ENCODE measurements at regions of chr12 and their contacts with region 1.

Region 1: DNA sequence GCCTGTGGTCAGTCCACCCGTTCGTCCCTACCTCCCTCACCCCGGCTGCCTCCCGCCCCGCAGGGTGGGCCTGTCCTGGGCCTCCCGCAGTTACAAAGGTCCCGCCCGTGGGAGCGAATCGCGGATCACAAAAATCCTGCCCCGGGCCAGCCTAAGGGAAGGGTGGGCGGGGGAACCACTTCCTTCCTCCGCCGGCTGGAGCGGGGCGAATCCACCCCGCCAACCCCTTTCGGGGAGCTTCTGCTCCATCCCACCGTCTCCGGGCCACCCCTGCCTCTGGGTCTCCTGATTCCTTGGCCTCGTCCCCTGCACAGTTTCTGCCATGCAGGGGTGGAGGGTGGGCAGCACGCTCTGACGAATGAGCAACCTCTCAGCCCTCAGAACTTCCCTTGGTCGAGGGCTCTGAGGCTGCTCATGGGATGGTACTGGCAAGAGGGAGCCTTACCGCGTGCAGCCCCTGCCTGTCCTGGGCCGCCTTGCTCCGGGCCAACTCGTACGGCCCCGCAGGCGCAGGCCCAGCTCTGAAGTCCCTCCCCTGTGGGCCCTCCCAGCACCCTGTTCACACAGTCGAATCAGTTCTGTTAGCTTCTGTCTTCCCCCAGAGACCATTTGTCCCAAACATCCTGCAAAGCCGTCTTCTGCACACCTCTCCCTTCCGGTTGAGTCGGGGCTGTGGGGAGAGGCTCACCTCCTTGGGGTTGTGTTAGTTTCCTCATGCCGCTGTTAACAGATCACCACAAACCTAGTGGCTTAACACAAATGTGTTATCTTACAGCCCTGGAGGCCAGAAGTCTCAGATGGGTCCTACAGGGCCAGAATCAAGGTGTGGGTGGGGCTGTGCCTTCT is 589 bp upstream of the HVCN1 start:
- DNase-seq: peak; percentile 61
- ATAC-seq: peak; percentile 63
- H3K4me3 Mint-ChIP-seq: peak overlapping the region; percentile 92
- H3K27ac Mint-ChIP-seq: peak overlapping the region; percentile 89
- H3K4me1 Mint-ChIP-seq: peaks cover 82% of the 10 kb centered on the region
- H3K27me3 Mint-ChIP-seq: no peaks in the 10 kb centered on the region
- CTCF ChIP-seq: no peak

Region 2: GRCh38 chr12:110606253-110606611 is 83.3 kb before region 1 on chr12:
- CTCF ChIA-PET with region 1: interaction called, 4 read pairs
- POLR2A ChIA-PET with region 1: interaction called, 11 read pairs
- intact Hi-C with region 1: no loop called
- DNase-seq: no peak
- ATAC-seq: no peak
- H3K4me3 Mint-ChIP-seq: peak overlapping the region; percentile 85
- H3K27ac Mint-ChIP-seq: peak overlapping the region; percentile 94
- H3K4me1 Mint-ChIP-seq: peaks cover 84% of the 10 kb centered on the region
- H3K27me3 Mint-ChIP-seq: no peaks in the 10 kb centered on the region
- CTCF ChIP-seq: no peak

Region 3: DNA sequence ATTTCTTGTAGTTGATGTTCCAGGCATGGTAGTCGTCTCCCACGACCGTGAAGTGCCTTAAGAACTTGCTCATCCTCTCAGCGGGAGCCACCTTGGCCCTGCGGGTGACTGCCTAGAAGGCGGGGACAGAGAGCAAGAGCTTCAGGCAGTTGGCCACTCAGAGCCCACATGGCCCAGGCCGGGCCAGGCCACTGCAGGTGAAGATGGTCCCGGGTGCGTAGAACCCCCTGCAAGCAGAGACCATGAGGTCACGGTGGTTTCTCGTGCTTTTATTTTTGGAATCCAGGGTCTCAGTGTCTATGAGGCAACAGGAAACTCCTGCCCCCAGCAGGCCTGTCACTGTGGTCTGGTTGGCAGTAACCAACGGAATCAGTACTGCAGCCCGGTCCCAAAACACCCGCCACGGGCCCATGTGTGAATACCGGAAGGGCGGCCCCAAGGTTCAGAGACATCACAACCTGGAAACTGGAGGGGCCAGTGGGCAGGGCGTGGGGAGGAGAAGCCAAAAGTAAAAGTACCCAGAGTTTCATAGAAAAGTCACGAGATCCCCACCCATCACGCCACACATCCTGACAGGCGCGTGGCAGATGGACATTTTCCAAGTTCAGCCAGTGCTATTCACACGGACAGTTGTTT is 28.0 kb before region 1 on chr12:
- CTCF ChIA-PET with region 1: interaction called, 3 read pairs
- POLR2A ChIA-PET with region 1: interaction called, 30 read pairs
- intact Hi-C with region 1: loop called (anchors 1 kb)
- DNase-seq: peak; percentile 73
- ATAC-seq: peak; percentile 87
- H3K4me3 Mint-ChIP-seq: peak overlapping the region; percentile 82
- H3K27ac Mint-ChIP-seq: peak overlapping the region; percentile 97
- H3K4me1 Mint-ChIP-seq: peaks cover 89% of the 10 kb centered on the region
- H3K27me3 Mint-ChIP-seq: no peaks in the 10 kb centered on the region
- CTCF ChIP-seq: no peak

Region 4: DNA sequence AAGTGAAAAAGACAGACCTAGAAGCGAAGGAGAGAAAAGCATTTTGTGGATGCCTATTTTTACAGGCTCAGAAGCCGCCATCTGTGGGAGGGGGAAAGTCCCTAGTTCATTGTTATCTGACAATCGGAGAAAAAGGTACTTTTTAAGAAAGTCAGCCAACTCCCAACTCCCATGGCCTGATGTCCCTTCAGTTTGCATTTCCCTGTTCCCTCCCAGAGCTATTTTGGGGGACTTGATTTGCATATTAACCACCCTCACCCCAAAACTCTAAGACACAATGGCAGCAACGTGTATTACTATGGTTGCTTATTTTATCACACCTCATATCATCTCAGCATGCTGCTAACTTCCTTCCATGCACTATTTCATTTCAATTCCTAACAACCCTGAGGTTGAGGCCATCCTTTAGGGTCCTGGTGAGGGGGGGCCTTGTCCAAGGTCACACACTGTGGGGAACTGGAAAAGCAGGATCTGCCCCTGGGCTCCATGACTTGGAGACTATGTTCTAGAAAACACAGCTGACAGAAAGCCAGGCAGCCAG is 19.3 kb before region 1 on chr12:
- CTCF ChIA-PET with region 1: no interaction called
- POLR2A ChIA-PET with region 1: interaction called, 45 read pairs
- intact Hi-C with region 1: loop called (anchors 1 kb)
- DNase-seq: no peak
- ATAC-seq: peak; percentile 36
- H3K4me3 Mint-ChIP-seq: peak overlapping the region; percentile 78
- H3K27ac Mint-ChIP-seq: peak overlapping the region; percentile 94
- H3K4me1 Mint-ChIP-seq: peaks cover 96% of the 10 kb centered on the region
- H3K27me3 Mint-ChIP-seq: no peaks in the 10 kb centered on the region
- CTCF ChIP-seq: no peak

Region 5: GRCh38 chr12:110677206-110677911 is 12.1 kb before region 1 on chr12:
- CTCF ChIA-PET with region 1: interaction called, 4 read pairs
- POLR2A ChIA-PET with region 1: interaction called, 45 read pairs
- intact Hi-C with region 1: loop called (anchors 1 kb)
- DNase-seq: peak; percentile 50
- ATAC-seq: peak; percentile 64
- H3K4me3 Mint-ChIP-seq: peak overlapping the region; percentile 78
- H3K27ac Mint-ChIP-seq: peak overlapping the region; percentile 90
- H3K4me1 Mint-ChIP-seq: peaks cover 96% of the 10 kb centered on the region
- H3K27me3 Mint-ChIP-seq: no peaks in the 10 kb centered on the region
- CTCF ChIP-seq: no peak